CD4-positive, alpha-beta memory T cell (primary cell): ENCODE measurements at regions of chr7 and their contacts with region 1.

Region 1: GRCh38 chr7:92447345-92448204 is at the start of gene GATAD1:
- DNase-seq: peak; percentile 81 to 86 (median 84)
- H3K4me3 ChIP-seq: peak within 1 kb of the TSS; percentile 68 to 74
- H3K4me3 Mint-ChIP-seq: peak within 1 kb of the TSS; percentile 92 to 98 (median 94)
- H3K27ac ChIP-seq: peak within 1 kb of the TSS; percentile 97
- H3K27ac Mint-ChIP-seq: peak within 1 kb of the TSS; percentile 98 to 99 (median 98)
- H3K4me1 ChIP-seq: peaks cover 16% of the 10 kb centered on the region
- H3K4me1 Mint-ChIP-seq: peaks cover 7 to 24% (median 13%) of the 10 kb centered on the region in 4 donors
- H3K27me3 ChIP-seq: no peaks in the 10 kb centered on the region
- H3K27me3 Mint-ChIP-seq: no peaks in the 10 kb centered on the region
- total RNA-seq, gene GATAD1: 31.9 to 34.8 TPM

Region 2: GRCh38 chr7:91835846-91836368 is 611.7 kb before region 1 on chr7:
- CTCF ChIA-PET with region 1: interaction called, 22 read pairs
- POLR2A ChIA-PET with region 1: interaction called, 3 read pairs
- intact Hi-C with region 1: no loop called
- DNase-seq: no peak
- H3K4me3 ChIP-seq: no peak overlapping the region
- H3K4me3 Mint-ChIP-seq: no peak overlapping the region
- H3K27ac ChIP-seq: no peak overlapping the region
- H3K27ac Mint-ChIP-seq: no peak overlapping the region
- H3K4me1 ChIP-seq: no peaks in the 10 kb centered on the region
- H3K4me1 Mint-ChIP-seq: peaks cover 0 to 3% (median 0%) of the 10 kb centered on the region in 4 donors
- H3K27me3 ChIP-seq: no peaks in the 10 kb centered on the region
- H3K27me3 Mint-ChIP-seq: no peaks in the 10 kb centered on the region

Region 3: GRCh38 chr7:91940572-91941341 is 506.8 kb before region 1 on chr7 and contains the start of gene AKAP9:
- CTCF ChIA-PET with region 1: interaction called, 4 read pairs
- POLR2A ChIA-PET with region 1: interaction called, 7 read pairs
- intact Hi-C with region 1: loop called (anchors 2 kb)
- DNase-seq: peak; percentile 88 to 90 (median 89)
- H3K4me3 ChIP-seq: peak within 1 kb of the TSS; percentile 75 to 92
- H3K4me3 Mint-ChIP-seq: peak within 1 kb of the TSS; percentile 91 to 100 (median 96)
- H3K27ac ChIP-seq: peak within 1 kb of the TSS; percentile 92
- H3K27ac Mint-ChIP-seq: peak within 1 kb of the TSS; percentile 94 to 100 (median 98)
- H3K4me1 ChIP-seq: peaks cover 39% of the 10 kb centered on the region
- H3K4me1 Mint-ChIP-seq: peaks cover 22 to 59% (median 37%) of the 10 kb centered on the region in 4 donors
- H3K27me3 ChIP-seq: no peaks in the 10 kb centered on the region
- H3K27me3 Mint-ChIP-seq: peaks cover 0 to 1% of the 10 kb centered on the region in 2 donors
- total RNA-seq, gene AKAP9: 88.5 to 91.4 TPM

Region 4: GRCh38 chr7:92095380-92095779 is 352.2 kb before region 1 on chr7:
- CTCF ChIA-PET with region 1: no interaction called
- POLR2A ChIA-PET with region 1: no interaction called
- intact Hi-C with region 1: no loop called
- DNase-seq: no peak
- H3K4me3 ChIP-seq: no peak overlapping the region
- H3K4me3 Mint-ChIP-seq: no peak overlapping the region
- H3K27ac ChIP-seq: no peak overlapping the region
- H3K27ac Mint-ChIP-seq: peak overlapping the region in 2 of 7 donors; percentile 30 to 46
- H3K4me1 ChIP-seq: no peaks in the 10 kb centered on the region
- H3K4me1 Mint-ChIP-seq: peaks cover 0 to 1% (median 0%) of the 10 kb centered on the region in 4 donors
- H3K27me3 ChIP-seq: no peaks in the 10 kb centered on the region
- H3K27me3 Mint-ChIP-seq: no peaks in the 10 kb centered on the region

Region 5: GRCh38 chr7:92178927-92179924 is 268.3 kb before region 1 on chr7 and contains the start of gene LRRD1:
- CTCF ChIA-PET with region 1: interaction called, 4 read pairs
- POLR2A ChIA-PET with region 1: interaction called, 5 read pairs
- intact Hi-C with region 1: loop called (anchors 1 kb)
- DNase-seq: peak; percentile 85 to 89 (median 88)
- H3K4me3 ChIP-seq: peak within 1 kb of the TSS in 1 of 2 donors; percentile 36
- H3K4me3 Mint-ChIP-seq: peak within 1 kb of the TSS; percentile 77 to 85 (median 80)
- H3K27ac ChIP-seq: peak within 1 kb of the TSS; percentile 2
- H3K27ac Mint-ChIP-seq: peak within 1 kb of the TSS in 4 of 7 donors; percentile 13 to 59 (median 40)
- H3K4me1 ChIP-seq: no peaks in the 10 kb centered on the region
- H3K4me1 Mint-ChIP-seq: peaks cover 2 to 8% (median 3%) of the 10 kb centered on the region in 4 donors
- H3K27me3 ChIP-seq: no peaks in the 10 kb centered on the region
- H3K27me3 Mint-ChIP-seq: no peaks in the 10 kb centered on the region
- total RNA-seq, gene LRRD1: not detected

Region 6: GRCh38 chr7:92421676-92422435 is 25.7 kb before region 1 on chr7:
- CTCF ChIA-PET with region 1: interaction called, 123 read pairs
- POLR2A ChIA-PET with region 1: interaction called, 63 read pairs
- intact Hi-C with region 1: loop called (anchors 1 kb)
- DNase-seq: no peak
- H3K4me3 ChIP-seq: no peak overlapping the region
- H3K4me3 Mint-ChIP-seq: no peak overlapping the region
- H3K27ac ChIP-seq: no peak overlapping the region
- H3K27ac Mint-ChIP-seq: no peak overlapping the region
- H3K4me1 ChIP-seq: peaks cover 12% of the 10 kb centered on the region
- H3K4me1 Mint-ChIP-seq: peaks cover 9 to 11% (median 9%) of the 10 kb centered on the region in 4 donors
- H3K27me3 ChIP-seq: no peaks in the 10 kb centered on the region
- H3K27me3 Mint-ChIP-seq: peaks cover 13 to 14% of the 10 kb centered on the region in 2 donors

Region 7: DNA sequence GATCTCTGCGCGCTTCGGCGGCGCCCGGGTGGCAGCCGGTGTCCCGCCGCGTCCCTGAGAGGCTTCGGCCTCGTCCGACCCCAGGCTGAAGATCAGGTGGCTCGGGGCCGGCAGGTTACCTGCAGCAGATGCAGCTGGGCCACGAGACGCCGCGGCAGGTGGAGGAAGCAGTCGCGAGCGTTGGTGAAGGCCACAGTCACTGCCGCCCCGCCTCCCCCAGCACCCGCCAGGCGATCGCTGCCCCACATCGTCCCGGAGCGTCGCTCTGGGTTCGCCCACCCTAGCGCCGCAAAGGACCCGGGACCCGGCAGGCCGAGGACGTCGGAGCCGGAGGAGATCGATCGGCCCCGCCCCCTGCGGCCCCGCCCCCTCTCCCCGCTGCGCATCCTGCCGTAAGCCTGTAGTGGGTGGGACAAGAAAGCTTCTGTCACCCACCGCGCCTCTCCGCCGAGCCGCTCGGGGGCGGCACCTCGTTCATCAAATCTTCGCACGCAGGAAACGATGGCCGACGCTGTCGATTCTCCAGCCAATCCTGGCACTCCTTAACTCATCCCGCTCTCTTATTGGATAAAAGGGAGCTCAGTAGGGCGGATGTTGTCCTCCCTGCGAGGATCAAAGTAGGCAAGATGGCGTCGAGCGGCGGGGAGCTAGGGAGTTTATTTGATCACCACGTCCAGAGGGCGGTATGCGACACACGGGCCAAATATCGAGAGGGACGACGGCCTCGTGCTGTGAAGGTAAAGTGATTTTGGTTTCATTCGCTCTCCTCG is 80.8 kb after region 1 on chr7 and contains the starts of genes PEX1 and RBM48:
- CTCF ChIA-PET with region 1: interaction called, 18 read pairs
- POLR2A ChIA-PET with region 1: interaction called, 61 read pairs
- intact Hi-C with region 1: loop called (anchors 1 kb)
- DNase-seq: peak; percentile 93 to 98 (median 98)
- H3K4me3 ChIP-seq: peak within 1 kb of the TSS; percentile 92 to 97
- H3K4me3 Mint-ChIP-seq: peak within 1 kb of the TSS; percentile 93 to 99 (median 96)
- H3K27ac ChIP-seq: peak within 1 kb of the TSS; percentile 91
- H3K27ac Mint-ChIP-seq: peak within 1 kb of the TSS; percentile 87 to 100 (median 98)
- H3K4me1 ChIP-seq: peaks cover 33% of the 10 kb centered on the region
- H3K4me1 Mint-ChIP-seq: peaks cover 31 to 52% (median 38%) of the 10 kb centered on the region in 4 donors
- H3K27me3 ChIP-seq: no peaks in the 10 kb centered on the region
- H3K27me3 Mint-ChIP-seq: no peaks in the 10 kb centered on the region
- total RNA-seq, gene PEX1: 35.4 to 38.0 TPM
- total RNA-seq, gene RBM48: 37.5 to 37.9 TPM

Region 8: DNA sequence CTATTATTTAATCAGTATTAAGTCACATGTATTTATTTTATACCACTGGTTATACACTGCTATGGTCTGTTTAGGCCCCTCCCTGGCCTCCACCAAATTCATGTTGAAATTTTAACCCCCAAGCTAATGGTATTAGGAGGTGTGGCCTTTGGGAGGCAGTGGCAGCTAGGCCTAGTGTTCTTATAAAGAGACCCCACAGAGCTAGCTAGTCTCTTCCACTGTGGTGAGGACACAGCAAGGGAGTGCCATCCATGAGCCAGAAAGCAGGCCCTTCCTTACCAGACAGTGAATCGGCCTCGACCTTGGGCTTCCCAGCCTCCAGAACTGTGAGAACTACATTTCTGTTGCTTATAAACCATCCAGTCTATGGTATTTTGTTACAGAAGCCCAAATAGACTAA is 109.7 kb after region 1 on chr7:
- CTCF ChIA-PET with region 1: no interaction called
- POLR2A ChIA-PET with region 1: no interaction called
- intact Hi-C with region 1: no loop called
- DNase-seq: no peak
- H3K4me3 ChIP-seq: no peak overlapping the region
- H3K4me3 Mint-ChIP-seq: no peak overlapping the region
- H3K27ac ChIP-seq: no peak overlapping the region
- H3K27ac Mint-ChIP-seq: peak overlapping the region in 1 of 7 donors; percentile 36
- H3K4me1 ChIP-seq: no peaks in the 10 kb centered on the region
- H3K4me1 Mint-ChIP-seq: no peaks in the 10 kb centered on the region
- H3K27me3 ChIP-seq: no peaks in the 10 kb centered on the region
- H3K27me3 Mint-ChIP-seq: peaks cover 0 to 2% of the 10 kb centered on the region in 2 donors

Region 9: GRCh38 chr7:92641921-92642511 is 194.4 kb after region 1 on chr7:
- CTCF ChIA-PET with region 1: no interaction called
- POLR2A ChIA-PET with region 1: no interaction called
- intact Hi-C with region 1: no loop called
- DNase-seq: peak in 1 of 5 donors; percentile 72
- H3K4me3 ChIP-seq: no peak overlapping the region
- H3K4me3 Mint-ChIP-seq: peak overlapping the region; percentile 23 to 75 (median 60)
- H3K27ac ChIP-seq: peak overlapping the region; percentile 48
- H3K27ac Mint-ChIP-seq: peak overlapping the region; percentile 86 to 95 (median 92)
- H3K4me1 ChIP-seq: peaks cover 44% of the 10 kb centered on the region
- H3K4me1 Mint-ChIP-seq: peaks cover 46 to 77% (median 58%) of the 10 kb centered on the region in 4 donors
- H3K27me3 ChIP-seq: no peaks in the 10 kb centered on the region
- H3K27me3 Mint-ChIP-seq: no peaks in the 10 kb centered on the region

Region 10: DNA sequence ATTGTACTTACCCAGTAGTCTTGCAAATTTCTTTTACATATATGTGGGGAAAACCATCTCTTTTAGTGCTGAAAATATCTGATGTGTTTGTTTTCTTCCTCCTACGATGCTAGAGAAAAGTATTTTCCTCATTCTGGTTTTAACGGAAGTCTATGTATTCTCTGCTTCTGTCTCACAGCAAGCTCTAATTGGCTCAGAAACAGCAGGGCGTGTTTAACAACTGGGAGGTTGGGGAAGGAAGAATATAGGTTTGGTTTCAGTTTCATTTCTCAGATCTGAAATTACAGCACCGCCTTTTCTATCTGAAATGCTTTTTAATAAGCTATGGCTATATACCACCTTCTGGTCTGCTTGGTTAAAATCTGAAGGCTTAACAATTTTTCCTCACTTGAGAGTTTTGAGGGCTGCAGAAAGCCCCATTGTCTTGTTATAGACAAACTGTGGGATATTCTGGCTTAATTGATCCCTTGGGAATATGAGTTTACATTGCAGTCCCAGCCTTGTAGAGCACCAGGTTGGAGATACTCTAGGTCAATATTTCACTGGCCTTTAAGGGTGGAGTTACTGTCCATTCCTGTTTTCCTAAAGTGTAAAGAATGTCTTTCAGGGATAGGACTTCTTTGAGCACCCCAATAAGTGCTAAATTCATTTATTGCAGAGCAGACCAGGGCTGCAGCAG is 670.4 kb after region 1 on chr7 and contains the start of gene SAMD9:
- CTCF ChIA-PET with region 1: no interaction called
- POLR2A ChIA-PET with region 1: no interaction called
- intact Hi-C with region 1: loop called (anchors 1 kb)
- DNase-seq: peak; percentile 71 to 89 (median 82)
- H3K4me3 ChIP-seq: peak within 1 kb of the TSS; percentile 65 to 96
- H3K4me3 Mint-ChIP-seq: peak within 1 kb of the TSS; percentile 88 to 94 (median 91)
- H3K27ac ChIP-seq: peak within 1 kb of the TSS; percentile 75
- H3K27ac Mint-ChIP-seq: peak within 1 kb of the TSS; percentile 80 to 96 (median 95)
- H3K4me1 ChIP-seq: peaks cover 37% of the 10 kb centered on the region
- H3K4me1 Mint-ChIP-seq: peaks cover 33 to 60% (median 49%) of the 10 kb centered on the region in 4 donors
- H3K27me3 ChIP-seq: no peaks in the 10 kb centered on the region
- H3K27me3 Mint-ChIP-seq: no peaks in the 10 kb centered on the region
- total RNA-seq, gene SAMD9: 55.1 to 56.6 TPM